GM10248 (cell line): ENCODE measurements at regions of chr7 and their contacts with region 1.

Region 1: GRCh38 chr7:43260980-43261878 is 148.8 kb downstream of the HECW1 start:
- DNase-seq: peak; percentile 66
- CTCF ChIP-seq: peak; percentile 96

Region 2: GRCh38 chr7:42931834-42932651 is 329.2 kb before region 1 on chr7 and contains the starts of genes MRPL32 and PSMA2:
- CTCF ChIA-PET with region 1: interaction called, 10 read pairs
- POLR2A ChIA-PET with region 1: no interaction called
- DNase-seq: peak; percentile 95
- CTCF ChIP-seq: no peak

Region 3: DNA sequence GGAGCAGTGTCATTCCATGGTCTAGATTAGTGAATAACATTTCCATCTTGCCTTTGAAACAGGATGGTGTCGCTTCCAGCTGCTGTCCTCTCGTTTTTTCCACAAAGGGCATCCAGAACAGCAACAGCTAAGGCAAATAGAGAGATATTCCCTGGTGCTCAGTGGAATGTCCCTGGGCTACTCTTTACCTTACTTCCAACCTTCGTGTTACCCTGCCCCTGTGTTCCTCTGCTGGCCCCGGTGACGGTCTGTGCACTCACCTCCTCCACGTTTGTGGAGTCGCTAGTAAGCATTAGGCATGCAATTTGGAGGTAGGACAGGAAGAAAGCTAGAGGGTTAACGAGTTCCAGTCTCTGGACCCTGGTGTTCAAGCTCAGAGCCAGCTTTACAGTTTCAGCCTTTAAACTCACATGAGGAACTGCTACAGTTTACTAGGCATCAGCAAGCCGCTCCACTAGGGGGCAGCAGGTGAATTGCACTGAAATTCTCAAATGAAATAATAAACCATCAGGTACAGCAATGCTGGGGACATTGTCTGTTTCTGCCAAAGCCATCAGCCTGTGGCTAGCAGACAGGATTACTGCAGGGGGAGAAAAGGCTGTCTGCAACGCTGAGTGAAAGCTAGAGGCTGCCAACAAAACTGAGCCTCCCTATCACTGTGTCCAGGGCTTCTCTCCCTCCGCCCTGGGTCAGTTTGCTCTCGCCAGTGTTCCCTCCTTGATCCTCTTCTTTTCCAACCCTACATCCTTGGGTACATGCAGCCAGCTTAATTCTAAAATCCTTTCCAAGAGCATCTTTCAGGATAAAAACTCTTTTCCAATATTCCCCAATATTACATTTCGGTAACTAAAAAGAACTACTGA is 320.0 kb before region 1 on chr7:
- CTCF ChIA-PET with region 1: interaction called, 43 read pairs
- POLR2A ChIA-PET with region 1: no interaction called
- DNase-seq: peak; percentile 62
- CTCF ChIP-seq: peak; percentile 86

Region 4: DNA sequence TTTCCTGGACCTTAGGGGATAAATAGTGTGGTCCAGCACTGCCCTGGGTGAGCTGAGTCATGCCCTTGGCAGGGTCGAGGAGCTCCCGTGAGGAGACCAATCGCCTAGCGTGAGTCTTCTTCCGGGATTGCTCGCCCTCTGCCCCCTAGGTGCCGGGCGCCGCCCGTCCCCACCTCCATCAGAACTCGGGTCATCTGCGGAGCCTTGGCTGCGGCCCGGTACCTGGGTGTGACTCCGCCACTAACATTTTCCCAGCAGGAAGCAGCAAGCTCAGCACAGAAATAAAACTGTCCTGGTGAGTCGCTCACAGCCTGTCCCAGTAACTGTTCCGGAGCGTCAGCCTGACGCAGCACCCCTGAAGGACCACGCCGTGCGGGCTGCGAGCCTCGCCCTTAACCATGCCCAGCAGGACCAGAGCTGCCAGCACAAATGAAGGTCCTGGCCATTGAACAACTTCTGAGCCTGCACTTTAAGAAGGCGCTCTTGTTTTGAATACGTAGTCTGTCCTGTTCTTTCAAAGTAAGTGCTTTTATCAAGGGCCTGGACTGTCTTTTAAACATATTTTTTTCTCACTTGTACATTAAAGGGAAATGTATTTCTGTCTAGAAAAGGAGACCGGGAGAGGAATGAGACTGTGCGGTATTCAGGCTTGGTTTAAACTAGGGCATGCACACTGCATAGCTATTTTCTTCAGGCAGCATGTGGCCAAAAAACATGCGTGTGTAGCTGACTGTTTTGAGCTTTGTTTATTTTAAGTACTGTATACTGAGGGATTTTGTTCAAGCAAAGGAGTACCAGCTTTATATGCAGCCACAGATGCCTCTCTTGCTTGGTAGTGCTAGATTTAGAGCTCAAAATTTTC is 12.0 kb before region 1 on chr7:
- CTCF ChIA-PET with region 1: interaction called, 37 read pairs
- POLR2A ChIA-PET with region 1: interaction called, 3 read pairs
- DNase-seq: no peak
- CTCF ChIP-seq: no peak

Region 5: DNA sequence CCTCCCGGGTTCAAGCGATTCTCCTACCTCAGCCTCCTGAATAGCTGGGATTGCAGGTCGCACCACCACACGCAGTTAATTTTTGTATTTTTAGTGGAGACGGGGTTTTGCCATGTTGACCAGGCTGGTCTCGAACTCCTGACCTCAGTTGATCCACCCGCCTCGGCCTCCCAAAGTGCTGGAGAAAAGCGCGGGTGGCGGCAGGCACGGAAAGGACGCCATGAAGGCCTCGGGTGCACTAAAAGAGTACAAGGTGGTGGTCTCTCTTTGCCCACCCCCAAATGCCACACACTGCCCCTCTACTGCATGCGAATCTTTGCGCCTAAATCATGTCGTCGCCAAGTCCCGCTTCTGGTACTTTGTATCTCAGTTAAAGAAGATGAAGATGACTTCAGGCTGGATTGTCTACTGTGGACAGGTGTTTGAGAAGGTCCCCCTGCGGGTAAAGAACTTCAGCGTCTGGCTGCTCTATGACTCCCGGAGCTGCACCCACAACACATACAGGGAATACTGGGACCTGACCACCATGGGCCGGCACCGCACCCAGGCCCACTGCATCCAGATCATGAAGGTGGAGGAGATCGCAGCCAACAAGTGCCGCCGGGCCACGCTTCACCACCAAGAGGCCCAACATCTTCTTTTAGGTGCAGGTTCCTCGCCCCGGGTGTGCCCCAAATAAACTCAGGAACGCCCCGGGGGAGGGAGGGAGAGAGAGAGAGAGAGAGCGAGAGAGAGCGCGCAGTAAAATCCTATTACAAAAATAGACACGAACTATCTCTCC is 12.9 kb after region 1 on chr7:
- CTCF ChIA-PET with region 1: interaction called, 10 read pairs
- POLR2A ChIA-PET with region 1: no interaction called
- DNase-seq: no peak
- CTCF ChIP-seq: no peak